ENCODE measurements at regions of chr10 and their contacts with region 1.

Region 1: DNA sequence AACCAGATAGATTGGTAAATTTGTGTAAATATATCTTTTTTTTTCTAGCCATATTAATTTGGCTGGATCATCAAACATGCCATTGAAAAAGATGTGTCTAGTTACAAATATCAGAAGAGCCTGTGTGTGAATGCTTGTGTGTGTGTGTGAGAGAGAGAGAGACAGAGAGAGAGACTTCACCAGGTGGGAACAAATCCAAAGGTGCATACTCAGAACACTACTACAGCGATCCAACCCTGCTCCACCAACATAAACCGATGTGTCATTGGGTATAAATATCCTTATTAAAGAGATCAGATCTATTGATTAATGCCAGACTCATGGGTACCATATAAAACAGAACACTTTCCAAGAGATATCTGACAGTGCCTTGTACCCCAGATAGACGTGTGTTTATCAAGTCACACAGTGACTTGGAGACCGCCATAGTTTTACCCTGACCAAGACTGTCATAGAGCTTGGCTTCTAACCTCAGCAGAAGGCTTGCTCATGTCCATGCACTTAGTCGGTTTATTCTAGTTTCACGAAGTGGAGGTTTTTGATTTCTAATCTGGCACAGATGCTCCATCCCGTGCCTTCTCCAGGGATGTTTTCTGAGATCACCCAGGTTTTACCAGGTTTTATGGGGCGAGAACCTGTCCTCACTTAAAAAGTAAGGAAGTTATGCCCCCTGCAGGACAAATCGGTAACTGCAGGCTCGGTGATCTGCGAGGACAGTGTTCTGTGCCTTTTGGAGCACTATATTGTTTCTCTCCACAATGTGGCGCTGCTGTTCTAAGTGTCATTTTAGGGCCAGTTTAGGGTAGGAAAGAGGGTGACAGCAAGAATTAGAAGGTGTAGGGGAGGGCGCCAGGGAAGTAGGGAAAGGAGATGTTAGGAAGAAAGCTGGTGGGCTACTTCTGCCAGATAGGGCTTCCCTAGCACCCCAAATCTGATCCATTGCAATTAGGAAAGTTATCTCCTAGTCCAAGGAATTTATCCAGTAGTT is 29.3 kb upstream of the WNT8B start:
- DNase-seq: peak; percentile 89
- ATAC-seq: peak; percentile 93
- H3K4me3 ChIP-seq: no peak overlapping the region
- H3K27ac ChIP-seq: no peak overlapping the region
- H3K4me1 ChIP-seq: peaks cover 13% of the 10 kb centered on the region; the same call in 1 of the 2 replicates
- H3K27me3 ChIP-seq: no peaks in the 10 kb centered on the region
- CTCF ChIP-seq: peak; percentile 99
- EP300 ChIP-seq: no peak
- POLR2A ChIP-seq: no peak
- RAD21 ChIP-seq: peak; percentile 98

Region 2: GRCh38 chr10:100303724-100304319 is 129.7 kb before region 1 on chr10:
- CTCF ChIA-PET with region 1: interaction called, 25 read pairs
- POLR2A ChIA-PET with region 1: no interaction called
- in situ Hi-C with region 1: no loop called
- intact Hi-C with region 1: loop called (anchors 1 kb)
- DNase-seq: peak; percentile 23
- ATAC-seq: peak; percentile 66; the same call in 2 of the 3 replicates
- H3K4me3 ChIP-seq: no peak overlapping the region
- H3K27ac ChIP-seq: no peak overlapping the region
- H3K4me1 ChIP-seq: peaks cover 41% of the 10 kb centered on the region
- H3K27me3 ChIP-seq: 0 out of 5 replicates have a peak, but pooled peaks cover 0 to 6% of the 10 kb centered on the region in 2 experiments
- CTCF ChIP-seq: peak; percentile 77
- EP300 ChIP-seq: no peak
- POLR2A ChIP-seq: no peak
- RAD21 ChIP-seq: peak; percentile 52

Region 3: GRCh38 chr10:100346765-100347567 is 86.6 kb before region 1 on chr10 and contains the start of gene SCD:
- CTCF ChIA-PET with region 1: interaction called, 297 read pairs
- POLR2A ChIA-PET with region 1: interaction called, 5 read pairs
- in situ Hi-C with region 1: loop called (anchors 5 kb)
- intact Hi-C with region 1: loop called (anchors 1 kb)
- DNase-seq: peak; percentile 92
- ATAC-seq: peak; percentile 86
- H3K4me3 ChIP-seq: peak within 1 kb of the TSS; percentile 95 to 99 (median 95)
- H3K27ac ChIP-seq: peak within 1 kb of the TSS; percentile 82
- H3K4me1 ChIP-seq: peaks cover 63% of the 10 kb centered on the region
- H3K27me3 ChIP-seq: no peaks in the 10 kb centered on the region; a peak in 1 of 5 replicates
- CTCF ChIP-seq: peak; percentile 18; the same call in 1 of the 2 replicates
- EP300 ChIP-seq: peak in 1 of 2 experiments; percentile 38; a peak in 1 of 4 replicates
- POLR2A ChIP-seq: peak; percentile 91 to 92
- RAD21 ChIP-seq: no peak; the same call in 1 of the 2 replicates
- total RNA-seq, gene SCD: 338 and 492 TPM in 2 replicates

Region 4: DNA sequence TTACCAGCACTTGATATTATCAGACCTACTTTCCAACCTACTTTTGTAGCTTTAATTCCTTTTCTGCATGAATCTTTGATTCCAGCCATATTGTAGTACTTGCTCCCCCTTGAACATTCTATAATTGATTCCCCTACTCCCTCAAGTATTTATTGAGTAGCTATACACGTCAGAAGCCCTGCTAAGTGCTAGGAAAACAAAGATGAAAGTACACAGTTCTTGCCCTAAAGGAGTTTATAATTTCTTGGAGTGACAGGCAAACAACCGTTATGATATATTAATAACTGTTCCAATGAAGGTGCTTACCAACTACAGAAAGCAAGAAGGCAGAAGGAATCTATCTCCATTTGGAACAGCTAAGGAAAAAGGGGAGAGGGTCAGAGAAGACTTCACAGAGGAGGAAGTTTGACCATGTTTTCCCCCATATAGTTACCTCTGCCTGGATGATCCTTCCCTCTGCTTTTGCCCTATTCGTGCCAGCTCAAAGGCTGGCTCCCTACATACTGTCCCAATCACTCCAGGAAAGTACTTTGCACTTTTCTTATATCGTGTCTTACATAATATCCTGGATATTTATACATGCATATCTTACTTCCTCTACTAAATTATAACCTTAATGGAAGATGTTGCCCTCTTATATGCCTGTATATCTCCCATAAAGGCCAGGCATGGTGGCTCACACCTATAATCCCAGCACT is 31.8 kb before region 1 on chr10:
- CTCF ChIA-PET with region 1: no interaction called
- POLR2A ChIA-PET with region 1: no interaction called
- in situ Hi-C with region 1: no loop called
- intact Hi-C with region 1: no loop called
- DNase-seq: no peak
- ATAC-seq: no peak
- H3K4me3 ChIP-seq: no peak overlapping the region
- H3K27ac ChIP-seq: no peak overlapping the region
- H3K4me1 ChIP-seq: peaks cover 8% of the 10 kb centered on the region; the same call in 1 of the 2 replicates
- H3K27me3 ChIP-seq: no peaks in the 10 kb centered on the region
- CTCF ChIP-seq: no peak
- EP300 ChIP-seq: no peak
- POLR2A ChIP-seq: no peak
- RAD21 ChIP-seq: no peak

Region 5: DNA sequence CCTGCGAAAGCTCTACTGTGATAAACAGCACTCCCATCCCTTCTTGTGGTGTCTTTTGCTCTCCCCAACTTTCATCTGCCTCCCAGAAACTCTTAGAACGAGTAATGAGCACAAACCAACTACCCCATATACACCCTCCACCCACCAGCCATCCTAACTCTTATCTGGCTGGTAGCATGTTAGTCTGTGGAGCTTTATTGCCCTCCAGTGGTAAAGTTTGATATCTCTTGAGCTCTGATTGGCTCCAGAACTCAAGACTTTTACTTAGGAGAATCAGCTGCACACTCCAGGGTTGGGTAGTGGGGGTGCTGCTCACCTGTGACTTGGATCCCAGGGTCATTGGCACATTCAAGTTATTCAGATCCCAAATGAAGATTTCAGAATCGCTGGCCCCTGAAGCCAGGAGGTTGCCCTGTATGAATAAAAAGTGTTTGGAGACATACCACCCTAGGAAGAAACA is 75.2 kb after region 1 on chr10:
- CTCF ChIA-PET with region 1: interaction called, 26 read pairs
- POLR2A ChIA-PET with region 1: no interaction called
- in situ Hi-C with region 1: loop called (anchors 5 kb)
- intact Hi-C with region 1: loop called (anchors 1 kb)
- DNase-seq: peak; percentile 56
- ATAC-seq: peak; percentile 93
- H3K4me3 ChIP-seq: no peak overlapping the region
- H3K27ac ChIP-seq: no peak overlapping the region
- H3K4me1 ChIP-seq: peaks cover 7% of the 10 kb centered on the region; the same call in 1 of the 2 replicates
- H3K27me3 ChIP-seq: no peaks in the 10 kb centered on the region
- CTCF ChIP-seq: peak; percentile 77
- EP300 ChIP-seq: no peak
- POLR2A ChIP-seq: no peak
- RAD21 ChIP-seq: peak; percentile 69

Region 6: DNA sequence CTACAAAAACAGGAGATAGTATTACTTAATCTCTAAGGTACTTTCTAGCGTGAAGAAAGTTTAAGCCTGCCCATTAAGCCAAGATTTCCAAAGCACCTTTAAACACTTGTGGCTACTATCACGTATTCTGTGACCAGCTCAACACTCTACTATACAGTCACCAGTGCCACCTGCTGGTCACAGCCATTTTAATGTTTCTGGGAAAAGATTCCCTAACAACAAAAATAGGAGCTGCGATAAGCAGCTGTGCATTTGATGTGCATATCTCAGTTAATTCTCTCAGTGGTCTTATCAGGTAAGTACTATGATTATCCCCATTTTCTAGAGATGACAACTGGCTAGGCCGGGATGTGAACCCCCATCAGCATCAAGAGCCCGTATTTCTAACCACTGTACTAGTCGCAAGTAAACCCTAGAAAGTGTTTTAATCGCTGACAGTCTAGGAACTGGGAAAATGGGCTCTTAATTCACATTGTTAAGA is 85.3 kb after region 1 on chr10:
- CTCF ChIA-PET with region 1: interaction called, 32 read pairs
- POLR2A ChIA-PET with region 1: no interaction called
- in situ Hi-C with region 1: no loop called
- intact Hi-C with region 1: no loop called
- DNase-seq: peak; percentile 65
- ATAC-seq: peak; percentile 76
- H3K4me3 ChIP-seq: peak overlapping the region; percentile 41 to 78 (median 60); a peak in 5 of 6 replicates
- H3K27ac ChIP-seq: no peak overlapping the region
- H3K4me1 ChIP-seq: peaks cover 14% of the 10 kb centered on the region
- H3K27me3 ChIP-seq: no peaks in the 10 kb centered on the region
- CTCF ChIP-seq: peak; percentile 77
- EP300 ChIP-seq: no peak
- POLR2A ChIP-seq: no peak
- RAD21 ChIP-seq: no peak